ENCODE measurements at regions of chr4 and their contacts with region 1.

Region 1: DNA sequence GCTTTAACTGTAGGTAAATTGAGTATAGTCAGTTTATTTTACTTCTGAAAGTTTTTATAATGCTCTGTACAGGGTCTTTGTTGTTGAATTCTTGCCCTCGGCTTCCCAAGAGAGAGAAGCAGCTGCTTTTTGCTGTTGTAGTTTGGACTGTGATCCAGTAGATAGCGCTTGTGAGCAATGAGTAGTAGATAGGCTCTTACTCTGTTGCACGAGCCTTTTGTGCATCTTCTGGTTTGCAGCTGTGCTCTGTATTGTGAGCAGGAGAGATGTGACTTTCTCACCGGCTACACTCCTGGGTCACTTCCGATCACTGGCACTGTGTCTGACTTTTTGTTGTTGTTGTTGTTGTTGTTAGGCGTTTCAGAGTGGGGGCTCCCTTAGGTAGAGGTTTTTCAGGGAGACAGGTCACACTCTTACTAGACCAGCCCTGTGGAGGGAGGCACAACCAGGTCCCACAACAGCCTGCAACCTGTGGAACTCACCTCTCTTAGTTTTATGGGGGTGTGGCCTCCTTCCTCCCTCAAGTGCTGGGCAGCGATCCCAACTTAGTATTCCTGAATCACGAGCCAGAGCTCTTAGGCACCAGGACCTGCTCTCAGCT is 822.1 kb upstream of the GALNTL6 start:
- DNase-seq: peak; percentile 44
- ATAC-seq: peak; percentile 99
- H3K4me3 Mint-ChIP-seq: no peak overlapping the region
- H3K27ac Mint-ChIP-seq: no peak overlapping the region
- H3K4me1 Mint-ChIP-seq: peaks cover 4% of the 10 kb centered on the region; the same call in 1 of the 2 replicates
- H3K27me3 Mint-ChIP-seq: no peaks in the 10 kb centered on the region
- CTCF ChIP-seq: peak; percentile 48

Region 2: DNA sequence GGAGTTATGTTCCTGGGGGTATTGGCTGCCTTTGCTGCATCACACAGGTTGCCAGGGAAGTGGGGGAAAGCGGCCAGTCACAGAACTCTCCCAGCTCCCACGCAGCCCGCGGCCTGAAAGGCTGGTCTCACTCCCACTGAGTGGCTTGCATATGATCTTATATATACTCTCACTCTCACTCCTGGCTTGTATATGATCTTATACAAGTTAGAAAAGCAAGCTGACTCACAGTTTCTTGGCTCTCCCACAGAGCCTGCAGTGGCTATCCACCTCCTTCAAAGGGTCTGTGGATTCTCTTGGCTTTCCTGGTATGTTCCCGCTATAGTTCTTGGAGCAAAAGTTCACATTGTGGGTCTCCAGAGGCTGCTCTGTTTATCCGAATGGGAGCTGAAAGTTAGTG is 11.4 kb before region 1 on chr4:
- CTCF ChIA-PET with region 1: interaction called, 14 read pairs
- POLR2A ChIA-PET with region 1: no interaction called
- DNase-seq: peak; percentile 22
- ATAC-seq: peak; percentile 65
- H3K4me3 Mint-ChIP-seq: no peak overlapping the region
- H3K27ac Mint-ChIP-seq: no peak overlapping the region; the same call in 1 of the 2 replicates
- H3K4me1 Mint-ChIP-seq: peaks cover 8% of the 10 kb centered on the region
- H3K27me3 Mint-ChIP-seq: no peaks in the 10 kb centered on the region
- CTCF ChIP-seq: no peak

Region 3: DNA sequence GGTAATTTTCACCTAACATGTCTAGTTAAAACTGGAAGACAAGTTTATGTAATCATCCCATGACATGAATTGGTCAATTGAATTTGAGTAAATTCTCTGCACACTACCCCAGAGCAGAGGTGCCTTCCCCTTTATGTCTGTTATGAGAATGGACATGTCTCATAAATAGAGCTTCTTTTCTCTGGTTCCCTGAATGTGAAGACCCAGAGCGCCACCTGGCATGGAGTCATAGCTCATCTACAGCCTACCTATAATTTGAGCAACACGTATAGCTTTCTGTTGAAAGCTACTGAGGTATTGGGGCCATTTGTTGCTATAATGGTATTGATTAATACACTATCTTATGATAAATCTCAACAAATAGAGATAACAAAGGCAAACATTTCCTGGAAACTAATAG is 195.6 kb after region 1 on chr4:
- CTCF ChIA-PET with region 1: interaction called, 33 read pairs
- POLR2A ChIA-PET with region 1: no interaction called
- DNase-seq: peak; percentile 27
- ATAC-seq: peak; percentile 66
- H3K4me3 Mint-ChIP-seq: no peak overlapping the region
- H3K27ac Mint-ChIP-seq: no peak overlapping the region
- H3K4me1 Mint-ChIP-seq: no peaks in the 10 kb centered on the region
- H3K27me3 Mint-ChIP-seq: no peaks in the 10 kb centered on the region
- CTCF ChIP-seq: no peak